Common myeloid progenitor, CD34-positive (primary cell): ENCODE measurements at regions of chr12 and their contacts with region 1.

Region 1: DNA sequence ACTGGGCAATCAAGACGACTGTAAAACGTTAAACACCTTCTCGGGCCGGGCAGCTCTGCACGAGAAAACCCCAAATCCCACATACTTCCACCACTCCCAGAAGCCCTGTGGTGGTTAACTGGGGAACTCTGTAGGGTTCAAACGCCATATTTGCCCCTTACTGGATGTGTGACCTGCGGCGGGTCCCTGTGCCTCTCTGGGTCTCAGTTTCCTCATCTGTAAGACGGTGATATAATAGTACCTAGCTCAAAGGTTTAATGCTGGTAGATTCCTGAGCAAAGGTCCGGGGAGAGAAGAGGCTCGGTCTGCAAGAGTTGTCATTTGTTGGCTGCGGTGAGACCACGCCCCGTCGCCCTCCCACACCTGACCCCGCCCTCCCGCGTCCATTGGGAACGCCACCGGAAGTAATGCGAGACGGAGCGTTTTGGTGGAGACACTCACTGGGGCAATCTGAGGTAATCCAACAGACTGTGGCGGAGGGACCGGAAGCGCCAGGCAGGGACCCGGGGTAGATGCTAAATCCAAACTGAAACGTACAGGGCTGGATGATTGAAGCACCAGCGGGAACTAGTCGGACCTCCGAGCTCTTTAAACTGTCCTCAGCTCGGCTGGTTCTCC is 661 bp upstream of the OGFOD2 start:
- DNase-seq: peak; percentile 99
- H3K4me3 ChIP-seq: peak overlapping the region; percentile 93 to 99 (median 98)
- H3K27ac ChIP-seq: peak overlapping the region; percentile 98 to 99
- H3K4me1 ChIP-seq: peaks cover 0 to 43% (median 36%) of the 10 kb centered on the region in 4 experiments
- H3K27me3 ChIP-seq: no peaks in the 10 kb centered on the region

Region 2: DNA sequence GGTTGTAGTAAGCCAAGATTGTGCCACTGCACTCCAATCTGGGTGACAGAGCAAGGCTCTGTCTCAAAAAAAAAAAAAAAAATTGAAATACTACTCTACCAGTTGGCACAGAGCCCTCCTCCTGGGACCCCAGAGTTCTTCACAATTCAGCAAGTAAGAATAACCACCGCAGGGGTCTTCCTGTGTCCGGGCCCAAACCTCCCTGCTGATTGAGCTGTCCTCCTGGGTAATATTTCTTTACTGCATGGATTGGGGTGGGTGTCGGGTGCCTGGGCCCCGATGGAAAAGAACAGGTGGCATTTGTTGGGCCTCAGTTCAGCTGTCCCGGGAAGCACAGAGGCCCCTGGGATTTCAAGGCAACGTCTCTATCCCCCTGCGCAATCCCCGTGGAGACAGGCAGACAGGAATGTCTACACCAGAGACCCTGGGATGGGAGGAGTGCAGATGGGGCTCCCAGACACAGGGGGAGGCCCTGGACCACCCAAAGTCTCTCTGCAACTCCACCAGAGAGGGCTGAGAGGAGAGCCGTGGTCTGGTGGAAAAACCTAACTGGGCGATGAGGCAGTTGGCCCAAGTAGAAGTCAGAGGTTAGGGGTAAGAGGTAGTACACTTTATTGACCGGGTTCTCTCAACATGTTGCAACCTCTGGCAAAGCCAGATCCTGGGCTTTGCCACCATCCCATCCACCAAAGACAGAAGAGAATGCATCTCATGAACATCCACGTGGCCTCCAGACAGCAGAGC is 45.8 kb before region 1 on chr12:
- CTCF ChIA-PET with region 1: no interaction called
- POLR2A ChIA-PET with region 1: no interaction called
- DNase-seq: no peak
- H3K4me3 ChIP-seq: no peak overlapping the region
- H3K27ac ChIP-seq: no peak overlapping the region
- H3K4me1 ChIP-seq: peaks cover 7 to 14% (median 10%) of the 10 kb centered on the region in 4 experiments
- H3K27me3 ChIP-seq: no peaks in the 10 kb centered on the region

Region 3: GRCh38 chr12:122984612-122985337 is 10.4 kb after region 1 on chr12:
- CTCF ChIA-PET with region 1: interaction called, 8 read pairs
- POLR2A ChIA-PET with region 1: interaction called, 12 read pairs
- DNase-seq: peak in 1 of 3 donors; percentile 46
- H3K4me3 ChIP-seq: peak overlapping the region in 5 of 7 experiments; percentile 5 to 58 (median 47)
- H3K27ac ChIP-seq: peak overlapping the region in 1 of 2 experiments; percentile 59
- H3K4me1 ChIP-seq: peaks cover 3 to 56% (median 50%) of the 10 kb centered on the region in 4 experiments
- H3K27me3 ChIP-seq: no peaks in the 10 kb centered on the region

Region 4: DNA sequence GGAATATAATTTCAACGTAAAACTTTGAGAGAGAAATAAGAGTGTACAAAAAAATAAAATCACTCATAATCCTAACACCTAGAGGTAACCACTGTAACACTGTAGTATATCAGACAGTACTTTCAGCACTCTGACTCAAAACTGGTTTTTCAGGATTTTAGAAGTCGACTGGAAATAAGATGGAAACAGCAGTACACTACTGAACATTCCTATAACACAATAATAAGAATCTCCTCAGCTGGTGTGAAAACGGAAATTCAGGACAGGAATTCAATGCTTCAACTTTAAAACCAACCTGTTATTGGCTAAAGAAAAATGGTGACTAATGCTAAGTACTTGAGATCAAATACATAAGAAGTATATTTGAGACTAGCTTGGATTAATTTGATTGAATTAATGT is 188.8 kb after region 1 on chr12:
- CTCF ChIA-PET with region 1: no interaction called
- POLR2A ChIA-PET with region 1: no interaction called
- DNase-seq: no peak
- H3K4me3 ChIP-seq: no peak overlapping the region
- H3K27ac ChIP-seq: no peak overlapping the region
- H3K4me1 ChIP-seq: no peaks in the 10 kb centered on the region
- H3K27me3 ChIP-seq: no peaks in the 10 kb centered on the region

Region 5: GRCh38 chr12:123479442-123480180 is 505.2 kb after region 1 on chr12:
- CTCF ChIA-PET with region 1: no interaction called
- POLR2A ChIA-PET with region 1: no interaction called
- DNase-seq: no peak
- H3K4me3 ChIP-seq: no peak overlapping the region
- H3K27ac ChIP-seq: no peak overlapping the region
- H3K4me1 ChIP-seq: peaks cover 0 to 12% (median 10%) of the 10 kb centered on the region in 4 experiments
- H3K27me3 ChIP-seq: no peaks in the 10 kb centered on the region